ENCODE measurements at regions of chr2 and their contacts with region 1.

Region 1: GRCh38 chr2:196171248-196171871 is at the start of gene STK17B:
- DNase-seq: peak; percentile 98
- ATAC-seq: peak; percentile 66
- H3K4me3 Mint-ChIP-seq: peak within 1 kb of the TSS; percentile 96
- H3K27ac Mint-ChIP-seq: peak within 1 kb of the TSS; percentile 94
- H3K4me1 Mint-ChIP-seq: peaks cover 29% of the 10 kb centered on the region
- H3K27me3 Mint-ChIP-seq: no peaks in the 10 kb centered on the region
- total RNA-seq, gene STK17B: 453 to 469 TPM

Region 2: GRCh38 chr2:195879153-195879552 is 292.2 kb before region 1 on chr2:
- CTCF ChIA-PET with region 1: no interaction called
- POLR2A ChIA-PET with region 1: no interaction called
- DNase-seq: no peak
- ATAC-seq: no peak
- H3K4me3 Mint-ChIP-seq: no peak overlapping the region
- H3K27ac Mint-ChIP-seq: no peak overlapping the region
- H3K4me1 Mint-ChIP-seq: no peaks in the 10 kb centered on the region
- H3K27me3 Mint-ChIP-seq: peaks cover 4% of the 10 kb centered on the region

Region 3: GRCh38 chr2:195930082-195930481 is 241.3 kb before region 1 on chr2:
- CTCF ChIA-PET with region 1: no interaction called
- POLR2A ChIA-PET with region 1: no interaction called
- DNase-seq: no peak
- ATAC-seq: no peak
- H3K4me3 Mint-ChIP-seq: no peak overlapping the region
- H3K27ac Mint-ChIP-seq: no peak overlapping the region
- H3K4me1 Mint-ChIP-seq: no peaks in the 10 kb centered on the region
- H3K27me3 Mint-ChIP-seq: no peaks in the 10 kb centered on the region

Region 4: GRCh38 chr2:196149948-196150347 is 21.4 kb before region 1 on chr2:
- CTCF ChIA-PET with region 1: interaction called, 3 read pairs
- POLR2A ChIA-PET with region 1: interaction called, 27 read pairs
- DNase-seq: no peak
- ATAC-seq: no peak
- H3K4me3 Mint-ChIP-seq: peak overlapping the region; percentile 61
- H3K27ac Mint-ChIP-seq: peak overlapping the region; percentile 81
- H3K4me1 Mint-ChIP-seq: peaks cover 89% of the 10 kb centered on the region
- H3K27me3 Mint-ChIP-seq: no peaks in the 10 kb centered on the region

Region 5: GRCh38 chr2:196187898-196188458 is 16.6 kb after region 1 on chr2:
- CTCF ChIA-PET with region 1: interaction called, 7 read pairs
- POLR2A ChIA-PET with region 1: interaction called, 58 read pairs
- DNase-seq: no peak
- ATAC-seq: no peak
- H3K4me3 Mint-ChIP-seq: no peak overlapping the region
- H3K27ac Mint-ChIP-seq: peak overlapping the region; percentile 5
- H3K4me1 Mint-ChIP-seq: peaks cover 72% of the 10 kb centered on the region
- H3K27me3 Mint-ChIP-seq: no peaks in the 10 kb centered on the region

Region 6: GRCh38 chr2:196225213-196225612 is 53.9 kb after region 1 on chr2:
- CTCF ChIA-PET with region 1: interaction called, 16 read pairs
- POLR2A ChIA-PET with region 1: interaction called, 77 read pairs
- DNase-seq: no peak
- ATAC-seq: no peak
- H3K4me3 Mint-ChIP-seq: peak overlapping the region; percentile 12
- H3K27ac Mint-ChIP-seq: peak overlapping the region; percentile 27
- H3K4me1 Mint-ChIP-seq: peaks cover 80% of the 10 kb centered on the region
- H3K27me3 Mint-ChIP-seq: no peaks in the 10 kb centered on the region

Region 7: GRCh38 chr2:196249860-196250259 is 78.5 kb after region 1 on chr2:
- CTCF ChIA-PET with region 1: interaction called, 3 read pairs
- POLR2A ChIA-PET with region 1: interaction called, 25 read pairs
- DNase-seq: no peak
- ATAC-seq: peak; percentile 64
- H3K4me3 Mint-ChIP-seq: no peak overlapping the region
- H3K27ac Mint-ChIP-seq: peak overlapping the region; percentile 65
- H3K4me1 Mint-ChIP-seq: peaks cover 77% of the 10 kb centered on the region
- H3K27me3 Mint-ChIP-seq: no peaks in the 10 kb centered on the region

Region 8: DNA sequence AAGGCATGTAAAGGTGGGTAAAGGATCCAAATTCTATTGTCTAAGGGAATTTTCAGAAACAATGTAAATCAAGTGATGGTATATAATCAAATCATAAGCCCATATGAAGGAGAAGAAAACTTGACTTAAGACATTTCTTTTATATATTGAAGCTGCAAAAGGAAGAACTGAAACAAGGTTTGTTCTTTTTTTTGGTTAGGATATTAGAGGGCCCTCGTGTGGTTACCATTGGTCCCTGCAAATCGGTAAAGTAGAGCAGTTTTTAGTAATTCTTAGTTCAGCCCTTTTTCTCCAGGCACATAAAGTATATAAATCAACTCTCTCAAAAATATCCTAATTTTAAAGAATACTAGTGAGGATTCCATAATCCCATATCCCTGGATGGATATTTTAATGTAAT is 105.6 kb after region 1 on chr2:
- CTCF ChIA-PET with region 1: interaction called, 40 read pairs
- POLR2A ChIA-PET with region 1: interaction called, 71 read pairs
- DNase-seq: peak; percentile 61
- ATAC-seq: no peak
- H3K4me3 Mint-ChIP-seq: peak overlapping the region; percentile 31
- H3K27ac Mint-ChIP-seq: peak overlapping the region; percentile 89
- H3K4me1 Mint-ChIP-seq: peaks cover 48% of the 10 kb centered on the region
- H3K27me3 Mint-ChIP-seq: no peaks in the 10 kb centered on the region